Activated naive CD4-positive, alpha-beta T cell treated with anti-CD3 and anti-CD28 coated beads for 36 hours (primary cell): ENCODE measurements at regions of chr1 and their contacts with region 1.

Region 1: DNA sequence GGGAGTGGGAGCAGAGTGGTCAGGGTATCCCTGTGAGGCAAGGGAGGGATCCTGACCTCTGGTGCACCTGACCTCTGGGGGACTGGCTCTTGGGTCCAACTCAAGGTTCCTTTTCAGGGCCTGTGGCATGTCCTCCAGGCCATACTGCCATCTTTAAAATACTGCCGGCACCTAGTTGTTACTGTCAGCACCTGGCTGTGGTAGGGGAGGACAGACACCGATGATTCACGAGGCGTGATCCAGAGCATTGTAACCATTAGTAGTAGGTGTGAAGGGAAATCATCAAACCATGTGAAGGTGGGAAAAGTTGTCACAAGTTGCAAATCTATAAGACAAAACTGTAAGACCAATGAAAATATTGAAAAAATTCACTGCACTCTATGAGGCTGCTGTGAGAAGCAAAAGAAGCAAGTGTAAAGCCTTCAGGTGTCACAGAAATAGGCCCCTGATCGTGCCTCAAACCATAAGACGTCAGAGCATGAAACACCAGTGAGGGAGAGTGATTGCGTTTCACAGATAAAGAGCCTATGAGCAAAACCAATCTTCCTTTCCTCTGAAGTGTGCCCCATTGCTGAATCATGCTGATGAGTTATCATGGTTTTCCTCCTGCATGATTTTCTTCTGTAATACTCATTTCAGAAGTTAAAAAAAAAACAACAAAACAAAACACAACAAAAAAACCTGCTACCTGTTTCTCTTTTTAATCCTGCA is 55.3 kb downstream of the CDC7 start:
- DNase-seq: peak; percentile 84
- H3K4me3 Mint-ChIP-seq: peak overlapping the region; percentile 26
- H3K27ac Mint-ChIP-seq: peak overlapping the region; percentile 90
- H3K4me1 Mint-ChIP-seq: peaks cover 68% of the 10 kb centered on the region
- H3K27me3 Mint-ChIP-seq: no peaks in the 10 kb centered on the region

Region 2: GRCh38 chr1:91244737-91245136 is 311.2 kb before region 1 on chr1:
- CTCF ChIA-PET with region 1: no interaction called
- intact Hi-C with region 1: no loop called
- DNase-seq: no peak
- H3K4me3 Mint-ChIP-seq: no peak overlapping the region
- H3K27ac Mint-ChIP-seq: no peak overlapping the region
- H3K4me1 Mint-ChIP-seq: no peaks in the 10 kb centered on the region
- H3K27me3 Mint-ChIP-seq: peaks cover 6% of the 10 kb centered on the region

Region 3: DNA sequence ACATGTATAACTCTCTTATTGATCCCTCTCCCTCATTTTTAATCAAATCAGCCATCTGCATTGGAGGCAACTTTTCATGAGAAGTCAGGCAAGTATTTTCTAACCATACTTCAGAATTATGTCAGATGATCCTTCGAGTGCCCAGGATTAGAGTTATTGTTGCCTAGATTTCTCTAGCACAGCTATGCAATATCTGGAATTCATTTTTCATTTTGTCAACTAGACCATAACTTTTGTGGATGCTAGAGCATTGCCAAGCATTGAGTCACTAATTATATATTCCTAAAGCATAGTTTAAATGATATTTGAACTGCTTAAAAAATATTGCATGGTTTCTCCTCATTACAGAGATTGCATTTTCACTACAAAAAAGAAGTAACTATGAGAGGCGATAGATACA is 172.5 kb before region 1 on chr1:
- CTCF ChIA-PET with region 1: no interaction called
- intact Hi-C with region 1: no loop called
- DNase-seq: no peak
- H3K4me3 Mint-ChIP-seq: no peak overlapping the region
- H3K27ac Mint-ChIP-seq: no peak overlapping the region
- H3K4me1 Mint-ChIP-seq: no peaks in the 10 kb centered on the region
- H3K27me3 Mint-ChIP-seq: peaks cover 9% of the 10 kb centered on the region

Region 4: GRCh38 chr1:91500756-91501522 is 55.0 kb before region 1 on chr1 and contains the start of gene CDC7:
- CTCF ChIA-PET with region 1: no interaction called
- intact Hi-C with region 1: loop called (anchors 1 kb)
- DNase-seq: peak; percentile 87
- H3K4me3 Mint-ChIP-seq: no peak within 1 kb of the TSS
- H3K27ac Mint-ChIP-seq: no peak within 1 kb of the TSS
- H3K4me1 Mint-ChIP-seq: peaks cover 15% of the 10 kb centered on the region
- H3K27me3 Mint-ChIP-seq: no peaks in the 10 kb centered on the region
- total RNA-seq, gene CDC7: 27.0 TPM

Region 5: GRCh38 chr1:91591175-91591968 is 35.4 kb after region 1 on chr1:
- CTCF ChIA-PET with region 1: no interaction called
- intact Hi-C with region 1: loop called (anchors 1 kb)
- DNase-seq: peak; percentile 18
- H3K4me3 Mint-ChIP-seq: peak overlapping the region; percentile 52
- H3K27ac Mint-ChIP-seq: no peak overlapping the region
- H3K4me1 Mint-ChIP-seq: peaks cover 18% of the 10 kb centered on the region
- H3K27me3 Mint-ChIP-seq: no peaks in the 10 kb centered on the region

Region 6: DNA sequence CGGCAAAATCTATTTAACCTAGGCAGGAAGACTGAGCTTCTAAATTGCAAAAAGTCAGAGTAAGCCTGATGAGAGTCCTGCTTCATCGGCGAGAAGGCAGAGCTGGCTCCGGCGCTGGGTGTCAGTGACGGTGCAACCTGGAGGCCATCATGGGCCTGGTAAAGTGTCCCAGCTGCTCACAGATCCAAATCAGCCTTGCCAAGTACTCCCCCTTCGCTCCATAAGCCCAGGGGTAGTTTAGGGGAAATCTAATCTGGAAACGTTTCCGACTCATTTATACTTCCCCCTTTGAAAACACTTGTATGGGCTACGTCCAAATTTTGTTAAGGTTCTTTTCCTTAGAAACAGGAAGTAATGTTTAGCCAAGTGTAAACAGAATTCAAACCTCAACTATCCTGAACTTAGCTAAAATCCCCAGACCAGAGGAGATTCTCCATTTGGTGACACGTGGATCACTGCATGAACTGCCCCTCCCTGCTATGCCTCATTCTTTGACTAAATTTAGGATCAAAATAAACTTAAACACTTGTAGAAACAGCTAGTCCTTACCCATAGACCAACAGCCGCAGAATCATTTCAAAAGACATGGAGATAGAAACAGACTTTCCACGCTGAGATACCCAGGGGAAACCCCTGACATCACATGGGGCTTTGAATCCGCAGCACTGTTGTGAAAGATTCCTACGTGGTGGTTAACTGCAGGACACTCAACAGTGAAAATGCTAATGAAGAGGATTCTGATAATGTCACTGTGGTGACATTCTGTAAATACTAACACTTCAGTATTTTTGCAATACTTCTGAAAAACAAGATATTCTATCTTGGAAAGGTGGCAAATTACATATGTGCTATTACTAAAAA is 157.2 kb after region 1 on chr1:
- CTCF ChIA-PET with region 1: no interaction called
- intact Hi-C with region 1: loop called (anchors 1 kb)
- DNase-seq: peak; percentile 71
- H3K4me3 Mint-ChIP-seq: no peak overlapping the region
- H3K27ac Mint-ChIP-seq: peak overlapping the region; percentile 73
- H3K4me1 Mint-ChIP-seq: peaks cover 25% of the 10 kb centered on the region
- H3K27me3 Mint-ChIP-seq: no peaks in the 10 kb centered on the region

Region 7: GRCh38 chr1:91781371-91781825 is 225.4 kb after region 1 on chr1:
- CTCF ChIA-PET with region 1: no interaction called
- intact Hi-C with region 1: no loop called
- DNase-seq: no peak
- H3K4me3 Mint-ChIP-seq: no peak overlapping the region
- H3K27ac Mint-ChIP-seq: no peak overlapping the region
- H3K4me1 Mint-ChIP-seq: peaks cover 4% of the 10 kb centered on the region
- H3K27me3 Mint-ChIP-seq: no peaks in the 10 kb centered on the region

Region 8: GRCh38 chr1:91876040-91876470 is 320.1 kb after region 1 on chr1:
- CTCF ChIA-PET with region 1: interaction called, 3 read pairs
- intact Hi-C with region 1: loop called (anchors 1 kb)
- DNase-seq: peak; percentile 61
- H3K4me3 Mint-ChIP-seq: no peak overlapping the region
- H3K27ac Mint-ChIP-seq: peak overlapping the region; percentile 5
- H3K4me1 Mint-ChIP-seq: peaks cover 74% of the 10 kb centered on the region
- H3K27me3 Mint-ChIP-seq: no peaks in the 10 kb centered on the region

Region 9: GRCh38 chr1:92485381-92486257 is 929.6 kb after region 1 on chr1:
- CTCF ChIA-PET with region 1: no interaction called
- intact Hi-C with region 1: loop called (anchors 10 kb)
- DNase-seq: peak; percentile 91
- H3K4me3 Mint-ChIP-seq: peak overlapping the region; percentile 90
- H3K27ac Mint-ChIP-seq: peak overlapping the region; percentile 93
- H3K4me1 Mint-ChIP-seq: peaks cover 38% of the 10 kb centered on the region
- H3K27me3 Mint-ChIP-seq: no peaks in the 10 kb centered on the region